ENCODE measurements at regions of chr12 and their contacts with region 1.

Region 1: GRCh38 chr12:96327346-96327745 is 72.9 kb downstream of the CDK17 start:
- DNase-seq: peak; percentile 93
- H3K4me3 ChIP-seq: peak overlapping the region; percentile 56
- H3K27ac ChIP-seq: peak overlapping the region; percentile 96
- H3K4me1 ChIP-seq: peaks cover 76% of the 10 kb centered on the region
- CTCF ChIP-seq: no peak

Region 2: DNA sequence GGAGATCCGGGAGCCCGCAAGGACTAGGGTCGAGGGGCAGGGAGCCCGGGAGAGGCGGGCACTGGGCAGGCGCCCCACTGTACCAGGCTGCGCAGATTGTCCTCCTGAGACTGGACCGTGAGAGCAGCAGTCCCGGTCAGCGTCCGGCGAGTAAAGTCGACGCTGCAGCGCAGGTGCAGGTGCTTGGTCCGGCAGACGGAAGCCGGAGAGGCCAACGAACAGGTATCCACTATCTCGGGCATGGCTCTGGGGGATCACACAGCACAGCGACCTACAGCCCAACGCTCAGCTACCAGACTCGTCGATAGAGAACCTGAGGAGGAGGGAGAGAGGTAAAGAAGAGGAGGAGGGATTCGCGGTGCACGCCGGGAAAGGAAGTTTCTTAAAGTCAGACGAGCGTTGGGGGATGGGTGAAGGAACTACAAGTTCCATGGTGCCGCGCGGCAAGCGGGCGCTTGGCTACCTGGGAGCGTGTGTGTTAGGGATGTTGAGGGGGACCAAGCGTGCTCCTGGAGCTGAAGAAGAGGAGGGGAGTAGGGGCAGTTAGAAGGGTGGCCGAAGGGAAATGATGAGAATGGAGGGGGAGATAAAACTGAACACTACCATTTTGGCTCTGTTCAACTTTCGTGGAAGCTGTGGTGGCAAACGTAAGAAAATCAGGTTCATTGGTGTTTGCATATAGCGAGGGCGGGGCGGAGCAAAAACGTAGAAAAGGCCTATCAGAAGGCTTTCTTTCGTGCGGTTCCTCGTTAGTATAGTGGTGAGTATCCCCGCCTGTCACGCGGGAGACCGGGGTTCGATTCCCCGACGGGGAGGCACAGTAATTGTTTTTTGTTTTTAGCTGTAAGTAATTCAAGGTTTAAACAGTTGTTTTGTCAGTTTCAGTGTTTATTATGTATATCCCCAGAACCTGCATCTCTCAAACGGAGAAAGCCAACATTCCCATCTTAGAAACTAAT is 291.8 kb before region 1 on chr12 and contains the start of gene LTA4H:
- CTCF ChIA-PET with region 1: no interaction called
- POLR2A ChIA-PET with region 1: no interaction called
- intact Hi-C with region 1: loop called (anchors 5 kb)
- DNase-seq: peak; percentile 99
- H3K4me3 ChIP-seq: peak within 1 kb of the TSS; percentile 94
- H3K27ac ChIP-seq: peak within 1 kb of the TSS; percentile 59
- H3K4me1 ChIP-seq: peaks cover 22% of the 10 kb centered on the region
- CTCF ChIP-seq: no peak
- total RNA-seq, gene LTA4H: 75.6 and 86.7 TPM in 2 replicates

Region 3: GRCh38 chr12:96208801-96209549 is 118.4 kb before region 1 on chr12:
- CTCF ChIA-PET with region 1: no interaction called
- POLR2A ChIA-PET with region 1: interaction called, 3 read pairs
- intact Hi-C with region 1: loop called (anchors 2 kb)
- DNase-seq: peak; percentile 92
- H3K4me3 ChIP-seq: peak overlapping the region; percentile 33
- H3K27ac ChIP-seq: no peak overlapping the region
- H3K4me1 ChIP-seq: peaks cover 68% of the 10 kb centered on the region
- CTCF ChIP-seq: peak; percentile 49

Region 4: DNA sequence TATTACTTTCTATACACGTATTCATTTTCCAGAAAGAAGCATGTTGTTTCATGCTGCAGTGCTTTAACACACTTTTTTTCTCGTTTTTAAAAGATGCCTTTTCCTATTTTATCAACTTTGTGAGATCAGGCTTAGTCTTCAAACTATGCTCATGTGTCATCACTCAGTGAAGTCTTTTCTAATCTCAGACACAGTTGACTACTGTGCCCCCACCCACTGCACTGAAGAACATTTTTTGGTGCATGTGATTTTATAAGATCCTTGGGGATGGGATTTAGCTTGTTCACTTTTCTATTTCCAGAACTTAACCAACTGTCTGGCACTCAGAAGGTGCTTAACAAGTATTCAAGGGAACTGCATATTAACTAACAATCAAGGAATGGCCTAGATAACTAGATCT is 12.6 kb before region 1 on chr12:
- CTCF ChIA-PET with region 1: interaction called, 4 read pairs
- POLR2A ChIA-PET with region 1: interaction called, 27 read pairs
- intact Hi-C with region 1: no loop called
- DNase-seq: no peak
- H3K4me3 ChIP-seq: no peak overlapping the region
- H3K27ac ChIP-seq: no peak overlapping the region
- H3K4me1 ChIP-seq: peaks cover 24% of the 10 kb centered on the region
- CTCF ChIP-seq: no peak

Region 5: GRCh38 chr12:96375841-96376604 is 48.7 kb after region 1 on chr12:
- CTCF ChIA-PET with region 1: no interaction called
- POLR2A ChIA-PET with region 1: interaction called, 3 read pairs
- intact Hi-C with region 1: loop called (anchors 2 kb)
- DNase-seq: peak; percentile 37
- H3K4me3 ChIP-seq: peak overlapping the region; percentile 35
- H3K27ac ChIP-seq: peak overlapping the region; percentile 39
- H3K4me1 ChIP-seq: peaks cover 47% of the 10 kb centered on the region
- CTCF ChIP-seq: no peak

Measured in OCI-LY7 (cell line).